ENCODE measurements at regions of chr6 and their contacts with region 1.

Region 1: DNA sequence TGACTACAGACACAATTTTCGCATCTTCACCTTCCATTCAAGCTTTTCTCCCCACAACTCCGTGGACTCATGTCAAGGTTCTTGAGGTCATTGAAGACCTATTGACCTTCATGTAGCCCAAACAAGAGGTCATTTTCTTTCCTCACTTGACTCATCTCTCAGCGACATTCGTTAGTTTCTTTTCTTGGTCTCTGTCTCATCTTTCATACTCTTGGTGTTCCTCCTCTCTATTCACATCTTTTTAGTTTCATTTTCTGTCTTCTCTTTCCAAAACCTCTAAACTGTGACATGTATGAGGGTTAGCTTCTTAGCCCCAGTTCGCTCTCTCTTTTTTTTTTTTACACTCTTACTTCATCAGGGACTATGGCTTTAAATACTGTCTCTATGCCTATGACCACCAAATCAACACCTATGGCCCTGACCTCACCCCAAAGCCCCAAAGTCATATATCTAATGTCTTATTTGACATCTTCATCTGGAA is 128.6 kb upstream of the BACH2 start:
- DNase-seq: no peak
- ATAC-seq: peak; percentile 94
- H3K4me3 Mint-ChIP-seq: peak overlapping the region; percentile 64
- H3K27ac Mint-ChIP-seq: peak overlapping the region; percentile 91
- H3K4me1 Mint-ChIP-seq: peaks cover 27% of the 10 kb centered on the region
- H3K27me3 Mint-ChIP-seq: no peaks in the 10 kb centered on the region

Region 2: DNA sequence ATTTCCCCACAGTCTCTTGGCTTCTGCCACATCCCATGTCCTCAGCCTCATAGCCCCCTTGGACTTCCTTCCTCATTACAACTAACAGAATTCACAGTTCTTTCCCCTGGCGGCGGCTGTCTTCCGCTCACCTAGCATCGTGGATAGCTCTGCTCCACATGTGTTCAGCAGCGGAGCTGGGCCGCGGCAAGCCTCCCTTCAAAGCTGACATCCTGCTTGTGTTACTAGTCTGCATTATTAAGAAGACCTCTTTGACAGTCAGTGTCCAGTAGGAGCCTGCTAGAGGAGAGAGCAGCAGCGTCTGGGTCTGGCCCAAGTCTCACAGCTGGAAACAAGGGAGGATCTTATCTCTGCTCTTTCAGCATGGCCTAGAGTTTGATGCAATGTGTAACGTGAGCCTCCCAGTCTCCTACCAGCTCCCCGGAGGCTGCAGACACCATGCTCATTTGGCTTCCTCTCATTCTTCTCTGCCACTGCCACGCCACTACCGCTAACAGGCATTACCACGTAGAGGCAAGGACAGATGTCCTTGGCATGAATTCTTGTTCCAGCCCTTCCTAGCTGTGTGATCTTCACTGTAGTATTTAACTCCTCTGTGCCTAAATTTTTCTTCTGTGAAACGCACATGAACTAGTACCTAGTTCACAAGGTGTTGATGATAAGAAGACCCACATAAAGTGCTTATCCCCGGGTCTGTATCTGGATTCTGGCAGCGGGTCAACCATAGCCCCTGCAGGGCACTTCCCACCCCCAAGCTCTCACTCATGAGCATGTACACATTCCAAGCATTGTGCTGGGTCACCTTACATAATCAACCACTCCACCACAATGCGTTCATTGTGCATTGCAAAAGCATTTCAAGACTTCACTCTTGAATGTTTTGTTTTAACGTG is 21.5 kb before region 1 on chr6:
- CTCF ChIA-PET with region 1: interaction called, 26 read pairs
- POLR2A ChIA-PET with region 1: interaction called, 17 read pairs
- DNase-seq: no peak
- ATAC-seq: no peak
- H3K4me3 Mint-ChIP-seq: no peak overlapping the region
- H3K27ac Mint-ChIP-seq: peak overlapping the region; percentile 85
- H3K4me1 Mint-ChIP-seq: peaks cover 75% of the 10 kb centered on the region
- H3K27me3 Mint-ChIP-seq: no peaks in the 10 kb centered on the region

Region 3: GRCh38 chr6:90413867-90414266 is 11.3 kb before region 1 on chr6:
- CTCF ChIA-PET with region 1: interaction called, 36 read pairs
- POLR2A ChIA-PET with region 1: interaction called, 26 read pairs
- DNase-seq: peak; percentile 87
- ATAC-seq: peak; percentile 92
- H3K4me3 Mint-ChIP-seq: peak overlapping the region; percentile 56
- H3K27ac Mint-ChIP-seq: peak overlapping the region; percentile 93
- H3K4me1 Mint-ChIP-seq: peaks cover 67% of the 10 kb centered on the region
- H3K27me3 Mint-ChIP-seq: no peaks in the 10 kb centered on the region

Region 4: DNA sequence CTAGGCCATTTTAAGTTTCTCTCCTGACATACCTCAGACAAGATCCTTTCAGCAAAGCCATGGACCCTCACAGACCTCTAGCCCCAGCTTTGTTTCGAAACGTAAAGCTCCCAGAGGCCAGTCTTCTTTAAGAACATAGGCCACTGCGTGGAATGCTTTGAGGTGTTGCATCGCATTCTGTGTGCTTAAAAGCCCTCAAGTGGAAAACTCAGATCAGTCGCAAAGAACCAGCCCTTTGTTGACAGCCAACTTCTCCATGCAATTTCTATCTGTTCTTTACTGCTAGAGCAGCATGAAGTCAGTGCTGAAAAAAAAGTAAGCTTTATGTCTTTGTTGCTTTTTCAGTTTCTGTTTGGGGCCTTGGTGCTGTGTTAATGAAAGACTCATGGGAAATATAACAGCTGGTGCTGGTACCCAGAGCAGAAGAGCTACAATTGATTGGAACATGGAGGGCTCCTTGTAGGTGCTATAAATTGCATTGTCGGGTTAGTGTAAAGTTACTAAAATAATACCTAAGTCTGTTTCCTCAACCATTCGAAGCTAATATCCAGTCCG is 19.0 kb after region 1 on chr6:
- CTCF ChIA-PET with region 1: interaction called, 14 read pairs
- POLR2A ChIA-PET with region 1: interaction called, 5 read pairs
- DNase-seq: no peak
- ATAC-seq: no peak
- H3K4me3 Mint-ChIP-seq: no peak overlapping the region
- H3K27ac Mint-ChIP-seq: no peak overlapping the region
- H3K4me1 Mint-ChIP-seq: peaks cover 25% of the 10 kb centered on the region
- H3K27me3 Mint-ChIP-seq: no peaks in the 10 kb centered on the region

Region 5: DNA sequence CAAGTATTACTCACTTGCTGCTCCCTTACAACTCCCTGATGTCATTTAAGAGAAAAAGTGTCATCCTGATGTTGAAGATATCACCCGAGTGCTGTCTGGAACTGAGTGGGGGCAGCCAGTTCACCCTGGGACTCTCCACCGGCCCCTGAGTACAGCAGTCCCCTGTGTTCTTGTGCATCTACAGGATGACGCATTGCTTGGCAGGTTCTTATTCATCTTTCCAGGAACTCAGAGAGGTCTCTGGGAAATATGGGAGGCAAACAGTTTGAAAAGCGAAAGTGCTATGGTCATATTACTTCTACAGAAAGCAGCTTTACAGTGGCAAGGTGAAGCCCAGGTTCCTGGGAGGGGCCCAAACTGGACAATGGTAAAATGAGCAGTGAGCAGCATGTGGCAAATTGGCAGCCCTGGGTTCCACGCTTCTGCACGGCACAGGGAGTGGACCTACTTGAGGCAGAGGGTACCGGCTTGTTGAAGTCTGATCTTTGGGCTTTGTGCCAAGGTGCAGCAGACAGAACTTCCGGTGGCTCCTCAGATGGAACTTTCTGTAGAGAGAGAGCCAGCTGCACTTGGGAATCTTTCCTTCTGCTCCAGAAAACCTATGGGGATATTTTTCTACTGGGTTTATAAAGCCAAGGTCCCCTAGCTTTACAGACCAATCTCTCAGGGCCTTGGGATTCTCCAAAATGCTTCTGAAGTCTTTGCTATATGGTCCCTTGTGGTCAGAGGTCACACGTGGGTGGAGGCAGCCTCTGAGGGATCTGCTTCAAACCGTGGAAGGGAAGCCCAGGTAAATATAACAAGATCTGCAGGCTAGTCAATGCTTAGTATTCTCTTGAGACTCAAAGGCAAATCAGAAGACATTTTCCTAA is 33.4 kb after region 1 on chr6:
- CTCF ChIA-PET with region 1: interaction called, 18 read pairs
- POLR2A ChIA-PET with region 1: interaction called, 3 read pairs
- DNase-seq: peak; percentile 71
- ATAC-seq: peak; percentile 86
- H3K4me3 Mint-ChIP-seq: peak overlapping the region; percentile 51
- H3K27ac Mint-ChIP-seq: peak overlapping the region; percentile 87
- H3K4me1 Mint-ChIP-seq: peaks cover 63% of the 10 kb centered on the region
- H3K27me3 Mint-ChIP-seq: no peaks in the 10 kb centered on the region

Region 6: DNA sequence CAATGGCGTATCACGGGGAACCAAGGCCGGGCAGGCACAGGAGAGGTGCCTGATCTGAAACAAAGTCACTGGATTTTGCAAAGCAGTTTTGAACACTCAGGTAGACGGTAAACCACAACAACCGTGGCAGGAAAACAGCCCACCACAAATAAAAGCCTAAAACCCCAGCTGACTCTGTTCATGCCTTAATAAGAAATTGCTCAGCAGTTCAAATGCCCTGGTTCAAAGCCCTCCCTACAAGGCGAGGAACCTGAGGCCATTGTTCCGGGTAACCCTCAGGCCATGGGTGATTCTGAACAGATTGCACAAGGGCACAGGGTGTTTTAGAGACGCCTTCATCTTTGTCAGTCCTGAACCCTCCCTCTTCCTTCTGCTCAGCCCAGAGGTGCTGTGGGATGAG is 47.5 kb after region 1 on chr6:
- CTCF ChIA-PET with region 1: interaction called, 123 read pairs
- POLR2A ChIA-PET with region 1: interaction called, 7 read pairs
- DNase-seq: peak; percentile 76
- ATAC-seq: peak; percentile 49
- H3K4me3 Mint-ChIP-seq: peak overlapping the region; percentile 24
- H3K27ac Mint-ChIP-seq: peak overlapping the region; percentile 62
- H3K4me1 Mint-ChIP-seq: peaks cover 91% of the 10 kb centered on the region
- H3K27me3 Mint-ChIP-seq: peaks cover 3% of the 10 kb centered on the region